ENCODE measurements at regions of chr22 and their contacts with region 1.

Region 1: DNA sequence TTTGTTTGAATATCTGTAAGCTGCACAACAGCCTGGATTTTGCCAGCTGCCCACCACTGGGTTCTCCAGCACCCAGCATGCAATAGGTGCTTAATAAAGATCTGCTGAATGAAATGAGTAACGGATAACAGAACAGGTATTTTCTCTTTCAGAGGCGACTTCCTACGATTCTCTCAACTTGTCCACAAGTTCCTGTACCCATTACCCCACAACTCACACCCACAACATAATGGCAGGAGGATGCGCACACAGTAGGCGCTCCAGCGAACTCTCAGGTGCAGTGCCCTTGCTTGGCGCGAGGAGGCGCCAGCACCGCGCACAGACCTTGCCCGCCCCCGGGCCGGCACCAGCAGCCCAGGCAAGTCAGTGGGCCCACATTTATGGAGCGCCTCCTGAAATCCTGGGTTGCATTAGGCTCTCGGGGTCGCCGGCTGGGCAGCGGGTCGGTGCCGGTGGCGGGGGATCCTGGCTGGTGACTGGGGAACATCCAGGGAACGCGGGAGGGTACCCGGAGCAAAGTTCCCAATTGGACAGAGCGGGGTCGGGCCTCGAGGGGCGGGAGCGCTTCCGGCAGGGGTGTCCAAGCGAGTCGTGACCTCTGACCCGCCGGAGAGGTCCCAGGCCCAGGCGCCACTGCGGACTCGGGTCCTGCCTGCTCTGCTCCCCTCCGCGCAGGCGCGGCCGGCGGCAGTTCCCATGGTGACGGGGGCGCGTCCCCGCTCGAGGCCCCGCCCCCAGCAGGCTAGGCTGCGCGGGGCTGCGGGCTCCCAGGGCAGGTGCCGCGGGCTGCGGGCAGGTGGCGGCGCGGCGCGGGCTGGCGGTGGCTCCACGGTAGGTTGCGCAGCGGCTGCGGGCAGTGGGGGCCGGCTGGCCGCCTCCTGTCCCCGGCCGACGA is at the start of gene KIAA1671:
- DNase-seq: peak; percentile 95
- total RNA-seq, gene KIAA1671: 26.2 to 27.4 TPM

Region 2: GRCh38 chr22:24972369-24972768 is 20.2 kb after region 1 on chr22:
- intact Hi-C with region 1: no loop called
- DNase-seq: no peak

Region 3: DNA sequence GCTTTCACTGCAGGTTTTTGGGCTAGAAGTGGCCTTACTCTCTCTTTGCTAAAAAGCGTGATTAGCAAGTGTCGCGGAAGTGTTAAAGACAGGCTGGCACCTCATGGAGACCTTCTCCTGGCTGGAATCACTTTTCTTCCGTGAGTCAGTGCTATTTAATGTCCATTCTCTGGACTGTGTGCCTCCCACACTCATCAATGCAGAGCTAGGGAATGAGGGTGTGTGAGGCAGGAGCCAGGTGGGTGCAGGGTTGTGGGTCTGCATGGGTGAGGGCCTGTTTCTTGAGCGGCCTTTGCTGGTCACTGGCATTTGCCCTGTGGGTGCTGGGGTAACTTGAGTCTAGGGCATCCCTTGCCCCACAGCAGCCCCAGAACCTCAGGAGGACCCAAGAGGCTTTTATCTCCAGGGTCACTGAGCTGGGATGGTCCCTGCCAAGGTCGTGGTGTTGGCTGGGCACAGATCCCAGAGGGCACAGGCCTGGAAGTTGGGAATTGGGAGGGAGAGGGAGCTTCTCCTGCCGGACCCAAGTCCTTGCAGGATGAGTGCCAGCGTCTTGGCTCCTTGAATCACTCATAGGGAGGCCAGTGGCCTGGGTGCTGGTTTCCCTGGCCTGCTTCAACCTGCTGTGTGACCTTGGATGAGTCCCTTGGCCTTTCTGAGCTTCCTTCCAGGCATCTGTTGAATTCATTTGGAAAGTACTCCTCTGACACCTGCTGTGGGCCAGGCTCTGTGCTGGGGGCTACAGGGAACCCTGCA is 30.3 kb after region 1 on chr22:
- intact Hi-C with region 1: loop called in 1 of 2 experiments (anchors 1 kb)
- DNase-seq: no peak

Region 4: GRCh38 chr22:25048659-25049647 is 96.8 kb after region 1 on chr22:
- intact Hi-C with region 1: loop called (anchors 2 to 5 kb)
- DNase-seq: no peak